MCF 10A (cell line): ENCODE measurements at regions of chr19 and their contacts with region 1.

Region 1: DNA sequence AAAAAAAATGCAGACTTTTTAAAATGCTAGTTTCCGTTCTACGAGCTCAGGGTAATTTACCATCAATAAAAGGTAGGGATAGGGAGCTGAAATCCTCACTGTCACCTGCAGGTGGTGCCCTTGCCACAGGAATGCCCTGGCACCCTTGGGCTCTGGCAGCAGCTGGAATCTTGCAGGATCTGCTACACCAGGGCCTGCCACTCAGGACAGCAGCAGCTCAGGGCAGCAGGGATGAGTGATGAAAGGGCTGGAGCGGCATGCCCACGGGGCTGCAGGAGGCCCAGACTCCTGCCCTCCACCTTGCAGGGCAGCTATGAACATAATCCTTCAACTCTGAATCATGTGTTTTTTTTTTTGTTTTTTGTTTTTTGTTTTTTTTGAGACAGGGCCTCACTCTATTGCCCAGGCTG is 54.0 kb downstream of the GNG7 start:
- DNase-seq: peak; percentile 80
- H3K4me3 Mint-ChIP-seq: no peak overlapping the region
- H3K27ac Mint-ChIP-seq: no peak overlapping the region
- H3K4me1 Mint-ChIP-seq: peaks cover 2% of the 10 kb centered on the region
- H3K27me3 Mint-ChIP-seq: peaks cover 30% of the 10 kb centered on the region
- CTCF ChIP-seq: peak; percentile 94

Region 2: DNA sequence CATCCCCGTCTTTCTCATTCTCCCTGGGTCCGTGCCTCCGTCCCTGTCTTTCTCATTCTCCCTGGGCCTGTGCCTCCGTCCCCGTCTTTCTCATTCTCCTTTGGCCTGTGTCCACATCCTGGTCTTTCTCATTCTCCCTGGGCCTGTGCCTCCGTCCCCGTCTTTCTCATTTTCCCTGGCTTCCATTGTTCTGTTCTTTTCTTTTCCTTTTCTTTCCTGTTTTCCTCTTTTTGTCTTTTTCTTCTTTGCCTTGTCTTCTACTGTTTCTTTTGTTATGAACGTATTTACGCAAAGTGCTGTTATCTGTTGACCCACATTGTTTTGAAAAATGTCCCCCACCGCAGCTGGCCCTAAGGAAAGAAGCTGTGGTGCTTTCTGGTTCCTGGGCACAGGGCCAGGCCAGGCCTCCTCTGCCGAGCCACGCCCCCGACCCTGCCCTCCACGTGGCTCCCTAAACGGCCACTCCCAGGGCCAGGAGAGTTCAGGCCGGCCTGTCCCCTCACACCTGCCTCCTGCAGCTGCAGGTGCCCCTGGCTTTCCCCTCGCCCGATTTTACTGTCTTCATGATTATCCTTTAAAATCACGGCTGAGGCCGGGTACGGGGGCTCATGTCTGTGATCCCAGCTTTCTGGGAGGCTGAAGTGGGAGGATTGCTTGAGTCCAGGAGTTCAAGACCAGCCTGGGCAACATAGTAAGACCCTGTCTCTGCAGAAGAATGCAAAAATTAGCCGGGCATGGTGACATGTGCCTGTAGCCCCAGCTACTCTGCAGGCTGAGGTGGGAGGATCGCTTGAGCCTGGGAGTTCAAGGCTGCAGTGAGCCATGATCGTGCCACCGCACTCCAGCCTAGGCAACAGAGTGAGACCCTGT is 302.5 kb before region 1 on chr19:
- CTCF ChIA-PET with region 1: no interaction called
- POLR2A ChIA-PET with region 1: no interaction called
- intact Hi-C with region 1: no loop called
- DNase-seq: peak; percentile 29
- H3K4me3 Mint-ChIP-seq: no peak overlapping the region
- H3K27ac Mint-ChIP-seq: no peak overlapping the region
- H3K4me1 Mint-ChIP-seq: peaks cover 7% of the 10 kb centered on the region
- H3K27me3 Mint-ChIP-seq: no peaks in the 10 kb centered on the region
- CTCF ChIP-seq: no peak

Region 3: GRCh38 chr19:2561895-2562294 is 86.6 kb before region 1 on chr19:
- CTCF ChIA-PET with region 1: no interaction called
- POLR2A ChIA-PET with region 1: no interaction called
- intact Hi-C with region 1: no loop called
- DNase-seq: peak; percentile 23
- H3K4me3 Mint-ChIP-seq: peak overlapping the region; percentile 25
- H3K27ac Mint-ChIP-seq: peak overlapping the region; percentile 75
- H3K4me1 Mint-ChIP-seq: peaks cover 7% of the 10 kb centered on the region
- H3K27me3 Mint-ChIP-seq: no peaks in the 10 kb centered on the region
- CTCF ChIP-seq: no peak

Region 4: DNA sequence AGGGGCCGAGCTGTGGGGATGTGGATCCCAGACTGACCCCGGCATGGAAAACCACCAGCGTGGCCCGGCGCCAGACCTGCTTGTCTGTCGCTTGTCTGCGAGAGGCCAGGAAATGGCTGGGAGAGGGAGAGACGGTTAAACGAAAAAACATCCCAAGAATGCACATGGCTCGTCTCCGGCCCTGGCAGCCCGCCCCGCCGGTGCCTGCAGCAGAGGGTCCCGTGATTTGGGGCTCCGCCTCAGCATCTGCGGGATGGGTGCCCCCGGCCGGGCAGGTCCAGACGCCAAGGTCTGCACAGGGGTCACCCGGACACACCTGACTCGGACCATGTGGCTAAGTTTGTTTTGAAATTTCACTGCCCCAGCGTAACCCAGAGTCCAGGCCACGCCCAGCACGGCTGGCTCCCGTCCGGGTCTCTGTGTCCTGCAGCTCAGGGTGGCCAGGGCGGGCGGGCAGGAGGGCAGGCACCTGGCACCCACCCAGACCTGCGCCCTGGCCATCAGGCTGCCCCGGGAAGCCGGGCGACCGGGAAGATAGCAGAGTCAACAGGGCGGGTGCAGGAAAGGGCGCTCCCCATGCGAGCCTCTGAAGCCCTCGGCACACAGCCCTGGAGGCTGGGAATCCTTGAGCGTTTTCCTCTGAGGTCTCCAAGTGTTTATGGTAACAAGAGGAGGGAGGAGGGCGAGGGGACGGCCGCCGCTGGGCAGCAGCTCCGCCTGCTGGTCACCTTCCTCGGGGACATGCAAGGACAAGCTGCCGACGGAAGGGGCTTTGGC is 69.4 kb before region 1 on chr19:
- CTCF ChIA-PET with region 1: no interaction called
- POLR2A ChIA-PET with region 1: no interaction called
- intact Hi-C with region 1: no loop called
- DNase-seq: peak; percentile 96
- H3K4me3 Mint-ChIP-seq: peak overlapping the region; percentile 67
- H3K27ac Mint-ChIP-seq: peak overlapping the region; percentile 40
- H3K4me1 Mint-ChIP-seq: peaks cover 5% of the 10 kb centered on the region
- H3K27me3 Mint-ChIP-seq: no peaks in the 10 kb centered on the region
- CTCF ChIP-seq: peak; percentile 86

Region 5: GRCh38 chr19:2750808-2751443 is 102.4 kb after region 1 on chr19:
- CTCF ChIA-PET with region 1: interaction called, 86 read pairs
- POLR2A ChIA-PET with region 1: interaction called, 13 read pairs
- intact Hi-C with region 1: loop called (anchors 1 kb)
- DNase-seq: no peak
- H3K4me3 Mint-ChIP-seq: no peak overlapping the region
- H3K27ac Mint-ChIP-seq: no peak overlapping the region
- H3K4me1 Mint-ChIP-seq: no peaks in the 10 kb centered on the region
- H3K27me3 Mint-ChIP-seq: no peaks in the 10 kb centered on the region
- CTCF ChIP-seq: no peak

Region 6: GRCh38 chr19:2869618-2870017 is 221.1 kb after region 1 on chr19:
- CTCF ChIA-PET with region 1: no interaction called
- POLR2A ChIA-PET with region 1: no interaction called
- intact Hi-C with region 1: loop called (anchors 5 kb)
- DNase-seq: no peak
- H3K4me3 Mint-ChIP-seq: no peak overlapping the region
- H3K27ac Mint-ChIP-seq: no peak overlapping the region
- H3K4me1 Mint-ChIP-seq: no peaks in the 10 kb centered on the region
- H3K27me3 Mint-ChIP-seq: no peaks in the 10 kb centered on the region
- CTCF ChIP-seq: no peak